MCF 10A (cell line): ENCODE measurements at regions of chr1 and their contacts with region 1.

Region 1: DNA sequence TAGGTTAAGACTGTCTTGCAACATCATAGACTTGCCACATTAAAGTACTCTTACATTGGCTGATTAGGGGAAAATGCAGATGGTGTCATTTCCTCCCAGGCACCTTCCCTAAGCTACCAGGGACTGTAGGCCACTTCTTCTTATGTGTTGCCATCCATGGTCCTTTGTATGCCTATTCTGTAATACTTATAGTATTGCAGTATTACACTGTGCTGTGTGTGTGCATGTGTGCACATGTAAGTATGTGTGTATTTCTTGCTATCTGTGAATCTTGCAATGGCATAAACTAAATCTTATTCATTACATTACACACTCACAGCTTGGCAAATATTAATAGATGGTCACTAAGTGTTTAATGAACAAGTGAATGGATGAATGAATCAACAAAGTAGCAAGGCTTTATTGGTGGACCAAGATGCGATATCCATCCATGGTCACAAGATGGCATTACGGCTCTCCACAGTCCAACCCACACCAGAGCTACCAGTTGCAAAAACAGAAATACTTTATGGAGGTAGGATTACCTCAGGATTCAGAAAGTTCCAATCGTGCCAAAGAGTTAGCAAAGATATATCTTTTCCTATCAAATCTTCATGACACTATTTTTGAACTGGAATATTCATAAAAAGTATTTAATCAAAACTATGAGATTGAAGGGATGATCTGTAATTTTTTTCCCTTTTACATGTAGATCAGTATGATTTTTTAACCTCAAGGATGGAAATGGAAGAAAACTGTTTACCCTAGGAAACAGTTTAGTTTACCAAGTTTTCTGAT is 160.2 kb downstream of the DENND1B start:
- DNase-seq: peak; percentile 67
- H3K4me3 Mint-ChIP-seq: no peak overlapping the region
- H3K27ac Mint-ChIP-seq: no peak overlapping the region
- H3K4me1 Mint-ChIP-seq: no peaks in the 10 kb centered on the region
- H3K27me3 Mint-ChIP-seq: no peaks in the 10 kb centered on the region
- CTCF ChIP-seq: peak; percentile 82

Region 2: DNA sequence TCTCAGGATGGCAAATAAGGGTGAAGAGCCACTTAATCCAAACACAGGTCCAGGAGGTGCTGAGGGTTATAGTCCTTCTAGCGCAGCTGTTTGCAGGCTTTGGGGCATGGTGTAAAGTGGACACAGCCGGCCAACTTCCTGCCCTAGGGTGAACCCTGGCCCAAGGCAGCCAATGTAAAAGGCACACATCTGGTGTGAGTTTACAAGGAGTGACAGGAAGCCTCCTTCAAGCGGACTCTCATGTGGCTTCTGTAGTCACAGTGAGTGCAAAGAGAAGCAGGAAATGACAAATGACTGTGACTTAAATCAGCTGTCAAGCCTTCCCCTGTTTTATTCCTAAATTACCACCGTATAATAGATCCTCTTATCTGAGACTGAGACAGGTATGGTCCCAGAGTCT is 134.0 kb before region 1 on chr1:
- CTCF ChIA-PET with region 1: no interaction called
- POLR2A ChIA-PET with region 1: no interaction called
- intact Hi-C with region 1: no loop called
- DNase-seq: no peak
- H3K4me3 Mint-ChIP-seq: no peak overlapping the region
- H3K27ac Mint-ChIP-seq: no peak overlapping the region
- H3K4me1 Mint-ChIP-seq: peaks cover 7% of the 10 kb centered on the region
- H3K27me3 Mint-ChIP-seq: no peaks in the 10 kb centered on the region
- CTCF ChIP-seq: no peak

Region 3: DNA sequence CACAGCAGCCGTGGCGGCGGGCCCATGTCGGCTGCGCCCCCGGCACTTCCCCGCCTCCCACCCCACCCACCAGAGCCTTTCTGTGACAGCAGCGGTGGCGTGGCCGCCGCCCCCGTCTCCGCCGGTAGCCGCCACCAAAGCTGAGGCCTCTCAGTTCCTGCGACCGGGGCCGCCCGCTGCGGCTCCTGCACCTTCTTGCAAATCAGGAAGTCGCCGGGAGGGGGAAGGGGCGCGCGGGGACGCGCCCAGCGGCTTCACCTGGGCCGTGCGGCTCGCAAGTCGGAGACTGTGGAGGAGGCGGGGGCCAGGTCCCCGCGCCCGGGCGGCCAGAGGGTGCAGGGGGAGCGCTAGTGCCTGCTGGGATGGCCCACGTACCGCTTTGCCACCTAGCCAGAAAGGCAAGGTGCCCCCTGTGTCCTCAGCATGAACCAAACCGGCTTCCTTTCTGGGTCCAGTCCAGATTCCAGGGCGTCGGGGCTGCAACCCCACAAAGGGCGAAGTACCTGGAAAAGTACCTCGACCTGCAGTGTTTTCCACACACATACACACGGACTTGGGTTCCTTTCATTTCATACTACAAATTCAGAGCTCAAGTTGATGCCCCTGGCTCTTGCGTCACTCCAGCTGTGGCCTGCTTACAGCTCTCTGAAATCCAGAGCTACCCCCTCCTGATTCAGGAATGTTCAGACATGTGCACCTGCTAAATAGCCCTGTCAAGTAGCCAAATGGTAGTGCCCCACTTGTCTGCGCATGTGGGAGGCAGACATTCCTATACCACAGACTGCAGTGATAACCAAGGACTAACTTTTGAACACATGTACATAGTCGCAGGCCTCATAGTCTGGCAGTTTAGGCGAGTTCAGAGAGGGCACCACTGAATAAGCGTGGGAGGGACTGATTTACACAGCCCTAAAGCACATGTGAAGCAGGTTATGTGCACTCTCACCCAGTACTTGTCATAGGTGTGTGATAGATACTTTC is 160.5 kb after region 1 on chr1 and contains the start of gene DENND1B:
- CTCF ChIA-PET with region 1: interaction called, 6 read pairs
- POLR2A ChIA-PET with region 1: interaction called, 3 read pairs
- intact Hi-C with region 1: loop called (anchors 5 kb)
- DNase-seq: peak; percentile 84
- H3K4me3 Mint-ChIP-seq: peak within 1 kb of the TSS; percentile 67
- H3K27ac Mint-ChIP-seq: peak within 1 kb of the TSS; percentile 72
- H3K4me1 Mint-ChIP-seq: peaks cover 45% of the 10 kb centered on the region
- H3K27me3 Mint-ChIP-seq: no peaks in the 10 kb centered on the region
- CTCF ChIP-seq: no peak
- total RNA-seq, gene DENND1B: 19.2 and 20.9 TPM in 2 replicates

Region 4: GRCh38 chr1:197915862-197916499 is 300.9 kb after region 1 on chr1:
- CTCF ChIA-PET with region 1: interaction called, 15 read pairs
- POLR2A ChIA-PET with region 1: no interaction called
- intact Hi-C with region 1: no loop called
- DNase-seq: peak; percentile 66
- H3K4me3 Mint-ChIP-seq: peak overlapping the region; percentile 59
- H3K27ac Mint-ChIP-seq: no peak overlapping the region
- H3K4me1 Mint-ChIP-seq: peaks cover 19% of the 10 kb centered on the region
- H3K27me3 Mint-ChIP-seq: no peaks in the 10 kb centered on the region
- CTCF ChIP-seq: peak; percentile 61

Region 5: GRCh38 chr1:197924516-197925123 is 309.5 kb after region 1 on chr1:
- CTCF ChIA-PET with region 1: interaction called, 33 read pairs
- POLR2A ChIA-PET with region 1: interaction called, 3 read pairs
- intact Hi-C with region 1: loop called (anchors 1 kb)
- DNase-seq: peak; percentile 84
- H3K4me3 Mint-ChIP-seq: no peak overlapping the region
- H3K27ac Mint-ChIP-seq: no peak overlapping the region
- H3K4me1 Mint-ChIP-seq: peaks cover 5% of the 10 kb centered on the region
- H3K27me3 Mint-ChIP-seq: no peaks in the 10 kb centered on the region
- CTCF ChIP-seq: peak; percentile 84